Activated CD4-positive, alpha-beta memory T cell treated with anti-CD3 and anti-CD28 coated beads for 36 hours (primary cell): ENCODE measurements at regions of chr13 and their contacts with region 1.

Region 1: GRCh38 chr13:29595380-29596063 is at the start of gene SLC7A1:
- DNase-seq: peak; percentile 90
- H3K4me3 Mint-ChIP-seq: peak within 1 kb of the TSS; percentile 89
- H3K27ac Mint-ChIP-seq: peak within 1 kb of the TSS; percentile 97
- H3K4me1 Mint-ChIP-seq: peaks cover 45% of the 10 kb centered on the region
- H3K27me3 Mint-ChIP-seq: peaks cover 1% of the 10 kb centered on the region
- total RNA-seq, gene SLC7A1: 106 to 114 TPM

Region 2: GRCh38 chr13:29543230-29544215 is 52.0 kb before region 1 on chr13:
- CTCF ChIA-PET with region 1: interaction called, 3 read pairs
- POLR2A ChIA-PET with region 1: no interaction called
- intact Hi-C with region 1: loop called (anchors 2 kb)
- DNase-seq: peak; percentile 83
- H3K4me3 Mint-ChIP-seq: no peak overlapping the region
- H3K27ac Mint-ChIP-seq: peak overlapping the region; percentile 62
- H3K4me1 Mint-ChIP-seq: peaks cover 41% of the 10 kb centered on the region
- H3K27me3 Mint-ChIP-seq: no peaks in the 10 kb centered on the region